ENCODE measurements at regions of chr4 and their contacts with region 1.

Region 1: DNA sequence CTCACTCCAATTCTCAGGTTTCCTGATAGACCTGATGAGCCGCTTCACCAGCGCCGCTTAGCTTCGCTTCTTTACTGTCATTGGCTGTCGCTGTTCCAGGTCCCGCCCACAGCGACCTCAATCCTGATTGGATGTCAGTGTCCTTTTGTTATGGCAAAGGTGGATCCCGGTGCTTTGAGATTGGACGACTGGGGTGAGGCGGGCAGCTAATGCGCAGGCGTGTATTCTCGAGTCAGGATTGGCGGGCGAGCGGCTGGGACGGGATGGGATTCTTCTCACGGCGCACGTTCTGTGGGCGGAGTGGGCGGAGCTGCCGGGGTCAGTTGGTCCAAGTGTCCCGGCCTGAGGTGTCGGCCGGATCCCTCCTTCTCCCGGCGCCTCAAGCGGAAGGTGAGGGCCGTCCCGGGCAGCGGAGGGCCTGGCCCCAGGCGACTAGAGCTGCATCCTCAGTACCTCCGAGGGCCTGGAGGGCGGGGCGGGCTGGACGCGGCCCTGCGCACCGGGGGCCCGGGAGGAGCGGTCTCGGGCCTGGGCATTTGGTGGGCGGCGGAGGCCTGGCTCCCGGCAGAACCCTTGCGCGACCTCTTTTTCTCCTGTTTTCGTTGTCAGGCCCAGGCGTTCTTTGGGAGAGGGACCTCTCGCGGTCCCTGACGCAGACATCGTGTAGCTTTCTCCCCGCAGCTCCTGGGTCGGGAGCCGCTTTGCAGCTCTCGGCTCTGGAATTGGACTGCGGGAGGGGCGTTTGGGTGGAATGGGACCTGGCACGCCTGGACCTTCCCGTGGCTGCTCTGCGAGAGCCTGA is at the start of gene SCOC:
- DNase-seq: peak; percentile 98
- ATAC-seq: peak; percentile 98
- H3K4me3 Mint-ChIP-seq: no peak within 1 kb of the TSS
- H3K27ac Mint-ChIP-seq: peak within 1 kb of the TSS; percentile 59
- H3K4me1 Mint-ChIP-seq: peaks cover 35% of the 10 kb centered on the region
- H3K27me3 Mint-ChIP-seq: no peaks in the 10 kb centered on the region
- total RNA-seq, gene SCOC: 37.1 to 47.8 TPM

Region 2: GRCh38 chr4:139083956-139084803 is 1289.3 kb before region 1 on chr4:
- CTCF ChIA-PET with region 1: no interaction called
- POLR2A ChIA-PET with region 1: no interaction called
- intact Hi-C with region 1: loop called in 1 of 2 experiments (anchors 5 kb)
- DNase-seq: peak; percentile 92
- ATAC-seq: peak; percentile 64
- H3K4me3 Mint-ChIP-seq: peak overlapping the region; percentile 100
- H3K27ac Mint-ChIP-seq: peak overlapping the region; percentile 99
- H3K4me1 Mint-ChIP-seq: peaks cover 30% of the 10 kb centered on the region
- H3K27me3 Mint-ChIP-seq: no peaks in the 10 kb centered on the region

Region 3: GRCh38 chr4:139554893-139555704 is 818.4 kb before region 1 on chr4:
- CTCF ChIA-PET with region 1: no interaction called
- POLR2A ChIA-PET with region 1: no interaction called
- intact Hi-C with region 1: loop called in 1 of 2 experiments (anchors 5 kb)
- DNase-seq: peak; percentile 91
- ATAC-seq: peak; percentile 76
- H3K4me3 Mint-ChIP-seq: peak overlapping the region; percentile 96
- H3K27ac Mint-ChIP-seq: peak overlapping the region; percentile 91
- H3K4me1 Mint-ChIP-seq: peaks cover 45% of the 10 kb centered on the region
- H3K27me3 Mint-ChIP-seq: no peaks in the 10 kb centered on the region

Region 4: DNA sequence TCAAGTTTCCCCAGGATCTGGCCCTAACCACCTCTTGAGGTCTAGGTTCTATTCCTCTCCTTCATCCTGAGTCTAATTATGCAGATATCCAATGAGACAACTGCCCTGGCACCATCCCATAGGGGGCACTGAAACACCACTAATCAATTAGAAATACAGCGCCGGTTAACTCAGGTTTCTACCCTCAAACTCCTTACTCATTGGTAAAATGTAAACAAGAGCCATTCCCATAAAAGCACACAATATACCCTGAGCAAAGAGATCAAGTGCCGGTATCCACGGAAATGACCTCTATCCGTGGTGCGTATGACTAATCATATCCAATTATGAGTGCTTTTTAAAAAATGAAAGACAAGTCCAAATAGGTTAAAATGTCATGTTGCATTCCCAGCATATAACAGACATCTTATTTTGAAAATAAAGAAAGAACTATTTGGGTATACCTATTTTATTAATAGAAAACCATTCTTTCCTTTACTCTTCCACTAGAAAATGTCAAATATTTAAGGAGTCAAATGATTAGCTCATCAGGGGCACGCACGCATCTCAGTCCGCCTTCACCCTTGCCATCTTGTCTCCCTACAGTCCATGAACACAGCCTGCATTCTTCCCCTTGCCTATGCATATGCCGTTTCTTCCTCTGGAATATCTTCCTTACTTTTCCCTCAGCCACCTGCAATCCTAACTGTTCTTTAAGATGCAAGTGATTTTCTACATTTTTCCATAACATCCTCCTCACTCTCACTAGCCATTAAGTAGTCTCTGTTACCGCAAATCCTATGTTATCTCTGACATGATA is 360.6 kb before region 1 on chr4:
- CTCF ChIA-PET with region 1: interaction called, 10 read pairs
- POLR2A ChIA-PET with region 1: no interaction called
- intact Hi-C with region 1: no loop called
- DNase-seq: peak; percentile 64
- ATAC-seq: peak; percentile 73
- H3K4me3 Mint-ChIP-seq: no peak overlapping the region
- H3K27ac Mint-ChIP-seq: no peak overlapping the region
- H3K4me1 Mint-ChIP-seq: peaks cover 9% of the 10 kb centered on the region
- H3K27me3 Mint-ChIP-seq: peaks cover 5% of the 10 kb centered on the region

Region 5: GRCh38 chr4:140359562-140360427 is 13.7 kb before region 1 on chr4:
- CTCF ChIA-PET with region 1: interaction called, 62 read pairs
- POLR2A ChIA-PET with region 1: interaction called, 3 read pairs
- intact Hi-C with region 1: no loop called
- DNase-seq: peak; percentile 89
- ATAC-seq: peak; percentile 97
- H3K4me3 Mint-ChIP-seq: no peak overlapping the region
- H3K27ac Mint-ChIP-seq: no peak overlapping the region
- H3K4me1 Mint-ChIP-seq: no peaks in the 10 kb centered on the region
- H3K27me3 Mint-ChIP-seq: peaks cover 3% of the 10 kb centered on the region

Region 6: DNA sequence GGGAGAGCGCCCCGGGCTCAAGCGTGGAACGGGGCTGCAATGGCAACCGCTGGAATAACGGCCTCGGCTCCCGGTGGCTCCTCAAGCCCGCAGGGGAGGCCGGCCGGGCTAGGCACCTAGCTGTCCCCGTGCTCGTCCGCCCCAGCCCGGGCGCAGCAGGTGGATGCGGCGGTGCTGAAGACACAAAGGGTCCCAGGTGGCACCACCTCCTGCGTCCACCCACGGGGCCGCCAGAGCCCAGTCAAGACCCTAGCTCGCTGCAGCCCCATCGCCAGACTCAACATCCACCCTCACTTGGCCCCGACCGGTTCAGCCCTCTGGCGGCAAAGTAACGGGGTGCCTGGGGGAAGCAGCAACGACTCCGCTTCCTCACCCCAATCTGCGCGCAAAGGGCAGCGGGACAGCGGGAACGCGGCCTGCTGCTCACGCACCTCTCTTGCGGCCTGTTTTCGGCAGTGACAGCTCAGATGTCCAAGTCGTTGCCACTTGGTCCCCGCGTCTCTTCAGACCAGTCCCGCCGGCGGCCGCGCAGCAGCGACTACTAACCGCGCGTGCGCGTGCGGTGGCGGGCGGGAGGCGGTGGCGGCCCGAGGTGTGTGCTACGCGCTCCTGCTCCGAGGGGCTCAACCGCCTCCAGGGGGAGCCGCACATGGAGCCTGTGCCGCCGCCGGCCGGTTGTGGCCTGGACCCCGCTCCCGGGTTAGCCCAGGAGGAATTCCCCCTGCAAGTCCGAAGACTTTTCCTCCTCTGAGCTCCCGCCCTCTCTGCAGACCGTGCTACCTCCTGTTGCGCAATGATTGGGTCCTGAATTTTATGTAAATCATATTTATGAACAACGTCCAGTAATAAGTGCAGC is 53.8 kb after region 1 on chr4 and contains the start of gene CLGN:
- CTCF ChIA-PET with region 1: interaction called, 4 read pairs
- POLR2A ChIA-PET with region 1: no interaction called
- intact Hi-C with region 1: loop called in 1 of 2 experiments (anchors 1 kb)
- DNase-seq: peak; percentile 74
- ATAC-seq: peak; percentile 88
- H3K4me3 Mint-ChIP-seq: peak within 1 kb of the TSS; percentile 72
- H3K27ac Mint-ChIP-seq: peak within 1 kb of the TSS; percentile 20
- H3K4me1 Mint-ChIP-seq: peaks cover 5% of the 10 kb centered on the region
- H3K27me3 Mint-ChIP-seq: peaks cover 40% of the 10 kb centered on the region
- total RNA-seq, gene CLGN: 0.18 to 0.19 TPM

Region 7: GRCh38 chr4:140662055-140662454 is 288.5 kb after region 1 on chr4:
- CTCF ChIA-PET with region 1: no interaction called
- POLR2A ChIA-PET with region 1: no interaction called
- intact Hi-C with region 1: no loop called
- DNase-seq: no peak
- ATAC-seq: no peak
- H3K4me3 Mint-ChIP-seq: no peak overlapping the region
- H3K27ac Mint-ChIP-seq: no peak overlapping the region
- H3K4me1 Mint-ChIP-seq: no peaks in the 10 kb centered on the region
- H3K27me3 Mint-ChIP-seq: peaks cover 4% of the 10 kb centered on the region

Region 8: DNA sequence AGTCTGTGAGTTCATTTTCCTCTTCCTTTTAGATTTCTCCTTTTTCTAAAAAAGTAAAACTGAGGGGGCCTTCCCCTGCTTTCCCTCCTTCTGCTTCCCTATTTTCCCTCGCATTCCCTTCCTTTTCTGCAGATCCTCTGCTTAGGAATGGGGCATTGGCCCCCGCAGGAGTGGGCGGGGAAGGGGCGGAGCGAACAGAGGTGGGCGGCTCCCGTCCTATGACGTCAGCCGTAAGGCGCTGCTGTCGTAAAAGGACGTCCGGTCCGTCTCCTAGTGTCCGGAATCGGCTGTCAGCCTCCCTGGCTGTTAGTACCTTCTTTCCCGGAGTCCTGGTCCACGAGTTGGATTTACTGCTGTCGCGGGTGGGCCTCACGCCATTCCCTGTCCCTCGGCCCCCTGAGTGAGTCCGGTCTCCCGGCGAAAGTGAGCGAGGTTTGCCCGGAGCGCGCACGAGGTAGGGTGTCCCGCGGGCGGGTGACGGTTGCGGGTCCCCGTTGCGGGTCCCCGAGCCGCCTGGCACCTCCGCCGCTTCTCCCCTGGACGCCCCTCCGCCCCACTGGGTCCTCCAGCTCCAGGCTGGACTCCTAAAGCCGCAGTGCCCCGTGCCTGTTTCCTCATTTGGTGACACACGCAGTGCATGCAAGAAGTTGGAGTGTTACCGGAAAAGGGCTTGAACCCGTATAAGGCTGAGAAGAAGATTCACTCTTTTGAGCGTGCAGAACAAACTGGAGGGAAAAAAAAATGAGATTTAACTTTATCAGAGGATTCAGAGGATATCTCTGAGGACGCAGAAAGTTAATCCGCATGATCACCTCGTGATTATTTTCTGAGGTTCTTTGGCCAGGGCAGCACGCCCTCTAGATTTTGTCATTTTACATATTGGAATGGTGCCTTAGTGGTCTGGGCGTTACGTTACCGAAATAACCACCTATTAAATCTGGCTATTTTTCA is 847.4 kb after region 1 on chr4 and contains the start of gene ZNF330:
- CTCF ChIA-PET with region 1: no interaction called
- POLR2A ChIA-PET with region 1: no interaction called
- intact Hi-C with region 1: loop called in 1 of 2 experiments (anchors 5 kb)
- DNase-seq: peak; percentile 93
- ATAC-seq: peak; percentile 85
- H3K4me3 Mint-ChIP-seq: peak within 1 kb of the TSS; percentile 92
- H3K27ac Mint-ChIP-seq: peak within 1 kb of the TSS; percentile 97
- H3K4me1 Mint-ChIP-seq: peaks cover 41% of the 10 kb centered on the region
- H3K27me3 Mint-ChIP-seq: no peaks in the 10 kb centered on the region
- total RNA-seq, gene ZNF330: 40.5 to 65.7 TPM

Measured in activated CD4-positive, alpha-beta T cell treated with anti-CD3 and anti-CD28 coated beads for 36 hours (primary cell).